Esophagus muscularis mucosa (tissue), 4 donors: ENCODE measurements at regions of chr9 and their contacts with region 1.

Region 1: DNA sequence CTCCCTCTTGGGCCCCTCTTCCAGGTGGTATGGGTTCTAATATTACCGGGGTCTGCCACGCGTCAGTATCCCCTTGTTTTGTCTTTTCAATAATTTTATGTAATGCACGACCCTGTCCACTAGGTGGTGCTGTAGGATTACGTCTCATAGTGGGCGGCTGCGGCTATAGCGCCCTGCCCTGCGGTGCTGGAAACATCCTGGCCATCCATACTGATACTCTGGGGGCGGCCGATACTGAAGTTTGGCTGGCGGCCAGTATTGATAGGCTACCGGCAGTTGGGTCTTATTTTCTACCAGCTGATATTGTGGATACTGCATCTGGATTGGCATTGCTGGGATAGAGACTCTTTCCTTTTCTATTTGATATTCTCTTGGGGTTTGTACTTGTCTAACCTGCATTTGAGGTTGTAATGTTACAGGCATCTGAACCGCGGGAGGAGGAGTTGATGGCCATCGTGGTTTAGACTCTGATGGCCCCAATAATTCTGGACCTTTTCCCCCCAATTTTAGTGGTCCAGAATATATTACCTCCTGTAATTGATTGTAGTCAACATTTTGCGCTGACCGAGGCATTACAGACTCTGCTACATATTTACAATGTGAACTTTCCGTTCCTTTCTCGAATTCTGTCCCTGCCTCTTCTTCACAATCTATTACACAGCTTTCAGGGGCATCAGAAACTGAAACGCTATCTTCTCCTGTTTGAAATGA is 3.3 kb upstream of the TMEM141 start:
- DNase-seq: no peak
- H3K4me3 ChIP-seq: no peak overlapping the region
- H3K27ac ChIP-seq: no peak overlapping the region
- H3K4me1 ChIP-seq: peaks cover 22 to 34% (median 32%) of the 10 kb centered on the region in 4 donors
- H3K27me3 ChIP-seq: no peaks in the 10 kb centered on the region
- CTCF ChIP-seq: peak; percentile 86 to 90 (median 88)
- EP300 ChIP-seq: no peak
- POLR2A ChIP-seq: no peak

Region 2: GRCh38 chr9:136488247-136489214 is 299.3 kb before region 1 on chr9:
- intact Hi-C with region 1: no loop called
- DNase-seq: no peak
- H3K4me3 ChIP-seq: no peak overlapping the region
- H3K27ac ChIP-seq: no peak overlapping the region
- H3K4me1 ChIP-seq: peaks cover 25 to 38% (median 28%) of the 10 kb centered on the region in 4 donors
- H3K27me3 ChIP-seq: no peaks in the 10 kb centered on the region
- CTCF ChIP-seq: peak in 2 of 3 experiments; percentile 98 to 99
- EP300 ChIP-seq: no peak
- POLR2A ChIP-seq: no peak

Region 3: DNA sequence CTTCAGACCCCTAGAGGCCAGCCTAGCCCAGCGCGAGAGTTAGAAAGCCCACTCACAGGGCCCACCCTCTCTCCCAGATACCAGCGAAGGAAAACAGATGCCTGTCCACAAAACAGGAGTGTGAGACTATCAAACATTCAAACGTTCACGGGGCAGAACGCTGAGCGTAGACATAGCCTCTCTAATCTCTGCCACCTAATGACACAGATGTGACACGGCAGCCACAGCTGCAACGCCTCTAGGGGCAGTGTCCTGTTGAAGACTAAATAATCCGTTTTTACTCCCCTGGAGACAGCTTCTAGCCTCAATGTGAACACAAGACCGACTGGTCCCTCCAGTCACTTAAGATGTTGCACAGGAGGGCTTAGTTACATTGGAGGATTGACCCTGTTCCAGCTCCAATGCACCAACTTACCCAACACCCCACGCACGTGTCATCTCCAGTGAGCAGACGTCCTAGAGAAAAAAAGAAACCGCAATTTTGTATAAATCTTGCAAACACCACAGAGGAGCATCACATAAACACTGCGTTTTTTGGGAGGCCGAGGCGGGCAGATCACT is 61.1 kb before region 1 on chr9:
- intact Hi-C with region 1: no loop called
- DNase-seq: no peak
- H3K4me3 ChIP-seq: peak overlapping the region; percentile 64 to 85 (median 74)
- H3K27ac ChIP-seq: peak overlapping the region in 3 of 4 donors; percentile 11 to 79 (median 13)
- H3K4me1 ChIP-seq: peaks cover 47 to 73% (median 62%) of the 10 kb centered on the region in 4 donors
- H3K27me3 ChIP-seq: no peaks in the 10 kb centered on the region
- CTCF ChIP-seq: peak in 1 of 3 experiments; percentile 16
- EP300 ChIP-seq: no peak
- POLR2A ChIP-seq: no peak

Region 4: DNA sequence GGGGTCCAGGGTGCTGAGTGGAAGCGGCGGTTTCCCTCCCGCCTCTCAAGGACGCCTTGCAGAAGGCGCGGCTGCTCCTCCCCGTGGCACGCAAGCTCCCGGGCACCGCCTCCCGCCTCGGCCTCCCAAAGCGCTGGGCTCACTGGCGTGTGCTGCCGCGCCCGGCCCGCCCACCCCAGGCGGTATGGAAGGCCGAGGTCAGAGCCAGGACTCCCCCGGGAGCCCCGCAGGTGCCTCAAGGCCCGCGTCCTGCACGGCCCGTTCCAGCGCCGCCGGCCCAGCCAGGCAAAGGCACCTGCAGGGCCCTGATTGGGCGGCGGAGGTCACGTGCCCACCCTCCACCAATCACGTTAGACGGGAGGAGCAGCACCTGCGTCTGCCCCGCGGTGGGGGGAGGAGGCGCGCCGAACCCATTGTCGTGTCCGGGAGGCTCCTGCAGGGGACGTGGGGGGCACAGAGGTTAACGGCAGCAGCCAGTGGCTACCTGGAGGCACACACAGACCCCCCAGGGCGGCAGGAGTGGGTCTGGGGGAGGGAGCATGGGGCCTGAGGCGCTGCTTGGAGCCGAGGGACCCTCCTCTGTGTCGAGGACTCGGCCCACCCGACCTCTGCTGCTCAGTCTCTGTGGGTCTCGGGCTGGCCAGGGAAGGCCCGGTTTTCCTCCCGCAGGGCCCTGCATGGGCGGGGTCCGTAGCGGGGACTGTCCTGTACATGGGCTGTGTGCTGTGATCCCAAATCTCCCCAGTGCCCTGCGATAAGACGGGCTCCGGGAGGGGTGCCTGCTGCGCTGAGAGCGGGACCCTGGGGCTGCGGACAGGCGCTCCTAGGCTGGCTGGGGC is 162.2 kb after region 1 on chr9:
- intact Hi-C with region 1: loop called (anchors 5 kb)
- DNase-seq: peak; percentile 98
- H3K4me3 ChIP-seq: peak overlapping the region; percentile 77 to 92 (median 84)
- H3K27ac ChIP-seq: peak overlapping the region; percentile 86 to 92 (median 90)
- H3K4me1 ChIP-seq: peaks cover 27 to 40% (median 31%) of the 10 kb centered on the region in 4 donors
- H3K27me3 ChIP-seq: no peaks in the 10 kb centered on the region
- CTCF ChIP-seq: peak; percentile 17 to 39 (median 32)
- EP300 ChIP-seq: no peak
- POLR2A ChIP-seq: peak; percentile 37

Region 5: DNA sequence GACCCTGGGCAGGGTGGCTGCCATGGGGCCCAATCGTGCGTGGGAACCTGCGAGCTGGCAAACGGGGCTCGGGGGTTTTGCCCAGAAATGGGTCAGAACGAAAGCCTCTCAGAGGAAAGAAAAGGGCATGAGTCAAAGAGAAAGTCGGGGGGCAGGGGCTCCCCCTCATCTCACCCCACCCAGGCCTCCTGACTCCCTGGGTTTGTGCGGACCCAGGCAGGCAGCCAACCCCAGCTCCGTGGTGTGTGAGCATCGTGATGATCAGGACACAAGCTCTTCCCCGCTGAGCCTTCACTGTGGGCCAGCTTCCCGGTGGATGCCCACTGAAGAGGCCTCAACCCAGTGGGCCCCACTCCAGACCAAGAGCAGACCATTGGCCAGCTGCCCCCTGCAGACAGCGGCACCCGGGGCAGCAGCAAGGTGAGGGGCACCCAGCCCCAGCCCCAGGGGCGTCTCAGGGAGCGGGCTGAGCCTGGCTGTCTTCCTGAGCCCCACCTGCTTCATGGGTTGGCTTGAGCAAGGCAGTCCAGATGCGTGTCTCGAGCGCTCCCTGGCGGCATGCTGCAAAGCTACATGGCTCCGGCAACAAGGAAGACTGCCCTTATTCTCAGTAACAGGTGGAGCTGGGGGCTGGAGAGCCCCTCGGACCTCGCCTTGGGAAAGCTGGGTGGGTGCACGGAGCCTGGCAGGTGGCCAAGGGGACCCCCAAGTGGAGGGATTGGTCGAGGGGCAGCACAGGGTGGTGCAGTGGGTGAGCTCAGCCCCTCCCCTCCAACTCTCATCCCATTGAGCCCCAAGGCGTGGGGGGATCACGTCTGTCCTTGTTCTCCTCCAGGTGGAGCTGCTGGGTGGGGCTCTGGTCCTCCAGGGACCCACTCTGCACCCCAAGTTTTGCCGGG is 247.3 kb after region 1 on chr9:
- intact Hi-C with region 1: loop called (anchors 2 kb)
- DNase-seq: no peak
- H3K4me3 ChIP-seq: peak overlapping the region in 1 of 4 donors; percentile 14
- H3K27ac ChIP-seq: no peak overlapping the region
- H3K4me1 ChIP-seq: peaks cover 9 to 16% (median 14%) of the 10 kb centered on the region in 4 donors
- H3K27me3 ChIP-seq: peaks cover 0 to 8% (median 0%) of the 10 kb centered on the region in 4 donors
- CTCF ChIP-seq: peak; percentile 88 to 94 (median 90)
- EP300 ChIP-seq: no peak
- POLR2A ChIP-seq: no peak